ENCODE measurements at regions of chr14 and their contacts with region 1.

Region 1: DNA sequence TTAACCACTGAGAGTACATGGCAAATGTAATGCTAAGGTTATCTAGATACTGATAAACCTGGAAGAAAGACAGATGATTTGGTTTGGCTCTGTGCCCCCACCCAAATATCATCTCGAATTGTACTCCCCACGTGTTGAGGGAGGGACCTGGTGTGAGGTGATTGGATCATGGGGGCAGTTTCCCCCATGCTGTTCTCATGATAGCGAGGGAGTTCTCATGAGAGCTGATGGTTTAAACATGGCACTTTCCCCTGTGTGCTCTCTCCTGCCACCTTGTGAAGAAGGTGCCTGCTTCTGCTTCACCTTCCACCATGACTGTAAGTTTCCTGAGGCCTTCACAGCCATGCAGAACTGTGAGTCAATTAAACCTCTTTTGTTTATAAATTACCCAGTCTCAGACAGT is 14.2 kb downstream of the NOXRED1 start:
- DNase-seq: peak; percentile 41
- ATAC-seq: peak; percentile 92
- H3K4me3 ChIP-seq: no peak overlapping the region
- H3K27ac ChIP-seq: no peak overlapping the region
- H3K4me1 ChIP-seq: peaks cover 9% of the 10 kb centered on the region
- H3K27me3 ChIP-seq: no peaks in the 10 kb centered on the region
- CTCF ChIP-seq: peak; percentile 83
- EP300 ChIP-seq: no peak
- POLR2A ChIP-seq: no peak
- RAD21 ChIP-seq: peak; percentile 64

Region 2: DNA sequence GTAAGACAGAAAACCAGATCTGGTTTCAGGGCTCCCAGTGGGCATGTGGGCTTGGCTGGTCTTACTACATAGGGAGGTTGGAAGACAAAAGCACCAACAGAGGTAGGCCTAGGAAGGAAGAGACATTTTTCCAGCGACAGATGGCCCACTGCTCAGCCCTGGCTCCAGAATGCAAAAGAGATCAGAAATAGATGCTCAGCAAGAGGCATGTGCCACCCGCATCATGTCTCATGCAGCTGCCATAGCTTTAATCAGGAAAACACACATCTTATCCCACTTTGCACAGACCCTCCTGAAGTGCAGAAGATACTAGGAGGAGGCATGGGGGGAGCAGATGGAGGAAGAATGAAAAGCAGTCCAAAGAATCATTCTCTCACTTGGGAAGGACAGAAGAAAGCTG is 622.5 kb before region 1 on chr14:
- CTCF ChIA-PET with region 1: no interaction called
- POLR2A ChIA-PET with region 1: no interaction called
- in situ Hi-C with region 1: no loop called
- intact Hi-C with region 1: no loop called
- DNase-seq: no peak
- ATAC-seq: no peak
- H3K4me3 ChIP-seq: no peak overlapping the region
- H3K27ac ChIP-seq: no peak overlapping the region
- H3K4me1 ChIP-seq: no peaks in the 10 kb centered on the region
- H3K27me3 ChIP-seq: no peaks in the 10 kb centered on the region
- CTCF ChIP-seq: no peak
- EP300 ChIP-seq: no peak
- POLR2A ChIP-seq: no peak
- RAD21 ChIP-seq: no peak

Region 3: DNA sequence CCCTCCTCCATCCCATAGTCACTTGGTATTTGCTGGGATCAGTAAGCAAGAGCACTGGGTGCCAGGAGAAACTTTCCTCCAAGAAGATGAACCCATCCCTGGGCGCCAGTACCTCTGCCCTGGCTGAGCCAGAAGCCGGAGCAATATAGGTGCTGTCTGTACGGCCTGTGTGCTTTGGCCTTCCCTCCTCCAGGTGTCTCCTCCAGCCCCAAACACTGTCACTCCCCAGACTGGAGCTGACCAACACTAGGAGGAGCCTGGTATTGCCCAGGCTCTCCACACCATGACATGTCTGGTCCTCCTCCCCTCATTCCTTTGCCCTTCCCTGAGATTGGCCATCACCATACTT is 83.4 kb before region 1 on chr14:
- CTCF ChIA-PET with region 1: no interaction called
- POLR2A ChIA-PET with region 1: no interaction called
- in situ Hi-C with region 1: no loop called
- intact Hi-C with region 1: loop called (anchors 2 kb)
- DNase-seq: peak; percentile 39
- ATAC-seq: peak; percentile 35
- H3K4me3 ChIP-seq: no peak overlapping the region
- H3K27ac ChIP-seq: no peak overlapping the region
- H3K4me1 ChIP-seq: peaks cover 41% of the 10 kb centered on the region
- H3K27me3 ChIP-seq: no peaks in the 10 kb centered on the region
- CTCF ChIP-seq: peak; percentile 58
- EP300 ChIP-seq: no peak
- POLR2A ChIP-seq: no peak
- RAD21 ChIP-seq: peak; percentile 31; the same call in 1 of the 2 replicates

Region 4: GRCh38 chr14:77457115-77457521 is 48.0 kb after region 1 on chr14:
- CTCF ChIA-PET with region 1: no interaction called
- POLR2A ChIA-PET with region 1: no interaction called
- in situ Hi-C with region 1: no loop called
- intact Hi-C with region 1: no loop called
- DNase-seq: no peak
- ATAC-seq: peak; percentile 49
- H3K4me3 ChIP-seq: peak overlapping the region; percentile 75 to 98 (median 90)
- H3K27ac ChIP-seq: peak overlapping the region; percentile 67
- H3K4me1 ChIP-seq: peaks cover 35% of the 10 kb centered on the region
- H3K27me3 ChIP-seq: no peaks in the 10 kb centered on the region; a peak in 1 of 5 replicates
- CTCF ChIP-seq: no peak
- EP300 ChIP-seq: no peak
- POLR2A ChIP-seq: peak; percentile 70 to 95
- RAD21 ChIP-seq: peak; percentile 23; the same call in 1 of the 2 replicates

Measured in HepG2 (cell line).